ENCODE measurements at regions of chr12 and their contacts with region 1.

Region 1: DNA sequence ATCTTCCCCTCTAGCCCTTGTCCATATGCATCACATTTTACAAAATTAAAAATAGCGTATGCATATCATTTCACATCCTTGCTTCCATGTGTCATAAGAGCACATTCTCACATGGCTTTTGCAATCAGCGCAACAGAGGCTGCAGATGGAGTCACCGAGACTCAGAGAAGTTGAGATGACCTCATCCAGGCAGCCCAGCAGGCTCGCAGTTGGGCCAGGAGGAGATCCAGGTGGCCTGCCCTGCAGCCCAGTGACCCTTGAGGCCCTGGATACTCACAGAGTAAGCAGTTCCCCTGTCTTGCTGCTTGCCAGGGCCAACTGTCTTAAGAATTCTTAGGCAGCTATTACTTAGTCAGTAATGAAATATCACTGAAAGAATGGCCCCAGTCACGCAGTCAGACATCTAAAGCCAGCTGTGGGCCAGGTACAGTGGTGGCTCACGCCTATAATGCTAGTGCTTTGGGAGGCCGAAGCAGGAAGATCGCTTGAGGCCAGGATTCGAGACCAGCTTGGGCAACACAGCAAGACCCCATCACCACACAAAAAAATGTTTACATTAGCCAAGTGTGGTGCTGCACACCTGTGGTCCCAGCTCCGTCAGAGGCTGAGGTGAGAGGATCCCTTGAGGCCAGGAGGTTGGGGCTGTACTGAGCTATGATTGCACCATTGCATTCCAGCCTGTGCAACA is 9.1 kb downstream of the CAMKK2 start:
- DNase-seq: no peak
- H3K4me3 ChIP-seq: no peak overlapping the region
- H3K27ac ChIP-seq: no peak overlapping the region
- H3K4me1 ChIP-seq: no peaks in the 10 kb centered on the region
- H3K27me3 ChIP-seq: no peaks in the 10 kb centered on the region
- CTCF ChIP-seq: no peak

Region 2: GRCh38 chr12:121252712-121253345 is 34.6 kb before region 1 on chr12:
- CTCF ChIA-PET with region 1: no interaction called
- dilution Hi-C with region 1: loop called (anchors 5 kb)
- in situ Hi-C with region 1: no loop called
- intact Hi-C with region 1: no loop called
- DNase-seq: no peak
- H3K4me3 ChIP-seq: no peak overlapping the region
- H3K27ac ChIP-seq: no peak overlapping the region
- H3K4me1 ChIP-seq: no peaks in the 10 kb centered on the region
- H3K27me3 ChIP-seq: no peaks in the 10 kb centered on the region
- CTCF ChIP-seq: no peak

Region 3: GRCh38 chr12:121345151-121345815 is 57.9 kb after region 1 on chr12:
- CTCF ChIA-PET with region 1: no interaction called
- dilution Hi-C with region 1: loop called (anchors 5 kb)
- in situ Hi-C with region 1: no loop called
- intact Hi-C with region 1: no loop called
- DNase-seq: peak; percentile 51
- H3K4me3 ChIP-seq: no peak overlapping the region
- H3K27ac ChIP-seq: no peak overlapping the region
- H3K4me1 ChIP-seq: no peaks in the 10 kb centered on the region
- H3K27me3 ChIP-seq: no peaks in the 10 kb centered on the region
- CTCF ChIP-seq: no peak

Measured in mammary epithelial cell (primary cell).